ENCODE measurements at regions of chr3 and their contacts with region 1.

Region 1: DNA sequence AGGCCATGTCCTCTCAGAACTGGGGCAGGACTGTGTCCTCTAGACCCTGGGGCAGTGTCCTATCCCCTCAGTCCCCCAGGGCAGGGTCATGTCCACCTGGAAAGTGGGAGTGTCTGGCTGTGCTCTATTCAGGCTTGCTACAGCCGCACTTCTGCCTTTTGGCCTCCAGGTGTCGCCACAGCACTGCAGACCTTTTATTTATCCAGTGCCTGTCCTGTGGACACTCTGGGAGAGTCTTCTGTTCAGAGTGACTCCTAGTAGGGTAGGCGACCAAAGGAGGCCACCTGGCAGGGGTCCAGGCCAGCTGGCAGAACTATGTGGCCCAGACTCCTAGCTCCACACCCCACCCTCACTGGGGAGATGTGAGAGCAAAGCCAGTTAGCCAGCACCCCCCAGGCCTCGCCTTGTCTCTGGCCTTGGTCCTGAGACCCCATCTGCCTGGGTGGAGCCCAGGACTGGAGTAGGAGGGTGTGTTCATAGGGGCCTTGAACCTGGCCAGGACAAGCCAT is 3.9 kb downstream of the TMIE start:
- DNase-seq: peak; percentile 60 to 78
- H3K4me3 ChIP-seq: no peak overlapping the region
- H3K27ac ChIP-seq: no peak overlapping the region
- H3K4me1 ChIP-seq: peaks cover 18% of the 10 kb centered on the region
- H3K27me3 ChIP-seq: no peaks in the 10 kb centered on the region
- CTCF ChIP-seq: peak; percentile 90

Region 2: DNA sequence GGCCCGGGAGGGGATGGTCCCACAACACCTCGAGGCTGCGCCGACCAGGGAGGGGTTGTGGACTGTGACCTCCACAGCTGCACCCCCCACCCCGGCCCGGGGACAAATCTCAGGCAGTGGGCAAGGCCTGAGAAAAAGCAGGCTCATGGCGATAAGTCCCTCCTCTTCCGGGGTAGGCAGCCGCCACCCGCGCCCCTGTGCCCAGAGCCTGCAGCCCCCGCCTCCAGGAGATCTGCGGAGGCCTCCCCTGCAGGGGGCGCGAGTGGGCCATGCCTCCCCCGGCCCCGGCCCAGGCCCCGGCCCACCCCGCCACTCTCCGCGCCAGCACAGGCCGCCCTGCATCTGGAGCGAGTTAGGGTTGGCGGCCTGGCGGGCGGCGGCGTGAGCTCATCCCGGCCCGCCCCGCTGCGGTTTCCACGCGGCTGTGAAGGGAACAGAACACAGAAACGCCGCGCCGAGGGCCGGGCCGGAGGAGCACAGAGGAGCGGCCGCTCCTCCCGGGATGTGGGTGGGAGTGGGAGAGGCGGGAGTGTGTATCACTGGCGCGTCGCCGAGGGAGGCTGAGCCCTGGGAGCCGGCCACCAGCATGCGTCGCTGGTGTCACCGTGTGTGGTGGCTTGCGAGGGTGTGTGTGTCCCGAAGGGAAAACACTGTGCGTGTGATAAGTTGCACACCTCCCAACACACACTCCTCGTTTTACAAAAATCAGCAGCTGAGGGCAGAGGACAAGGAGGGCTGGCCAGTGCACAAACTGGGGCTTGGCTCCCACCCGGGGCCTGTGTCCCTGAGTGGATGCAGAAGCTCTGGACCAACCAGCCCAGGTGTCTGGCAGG is 140.9 kb after region 1 on chr3:
- CTCF ChIA-PET with region 1: no interaction called
- POLR2A ChIA-PET with region 1: no interaction called
- intact Hi-C with region 1: loop called (anchors 1 kb)
- DNase-seq: peak in 1 of 2 experiments; percentile 88
- H3K4me3 ChIP-seq: peak overlapping the region; percentile 59; the same call in 1 of the 2 replicates
- H3K27ac ChIP-seq: no peak overlapping the region
- H3K4me1 ChIP-seq: 0 out of 2 replicates have a peak, but pooled peaks cover 5% of the 10 kb centered on the region
- H3K27me3 ChIP-seq: no peaks in the 10 kb centered on the region
- CTCF ChIP-seq: peak; percentile 48; the same call in 1 of the 2 replicates

Region 3: GRCh38 chr3:46895204-46895660 is 190.2 kb after region 1 on chr3:
- CTCF ChIA-PET with region 1: interaction called, 7 read pairs
- POLR2A ChIA-PET with region 1: no interaction called
- intact Hi-C with region 1: loop called (anchors 1 kb)
- DNase-seq: peak in 1 of 2 experiments; percentile 68
- H3K4me3 ChIP-seq: no peak overlapping the region
- H3K27ac ChIP-seq: no peak overlapping the region
- H3K4me1 ChIP-seq: 0 out of 2 replicates have a peak, but pooled peaks cover 4% of the 10 kb centered on the region
- H3K27me3 ChIP-seq: no peaks in the 10 kb centered on the region
- CTCF ChIP-seq: peak; percentile 86

Region 4: GRCh38 chr3:46998121-46998851 is 293.2 kb after region 1 on chr3:
- CTCF ChIA-PET with region 1: no interaction called
- POLR2A ChIA-PET with region 1: no interaction called
- intact Hi-C with region 1: loop called (anchors 5 kb)
- DNase-seq: peak; percentile 44 to 75
- H3K4me3 ChIP-seq: no peak overlapping the region
- H3K27ac ChIP-seq: no peak overlapping the region
- H3K4me1 ChIP-seq: no peaks in the 10 kb centered on the region
- H3K27me3 ChIP-seq: no peaks in the 10 kb centered on the region
- CTCF ChIP-seq: peak; percentile 79

Region 5: GRCh38 chr3:47380601-47381316 is 675.7 kb after region 1 on chr3 and contains the start of gene PTPN23:
- CTCF ChIA-PET with region 1: no interaction called
- POLR2A ChIA-PET with region 1: no interaction called
- intact Hi-C with region 1: loop called (anchors 5 kb)
- DNase-seq: peak; percentile 94 to 99
- H3K4me3 ChIP-seq: peak within 1 kb of the TSS; percentile 66
- H3K27ac ChIP-seq: peak within 1 kb of the TSS; percentile 92
- H3K4me1 ChIP-seq: peaks cover 21% of the 10 kb centered on the region
- H3K27me3 ChIP-seq: no peaks in the 10 kb centered on the region
- CTCF ChIP-seq: no peak
- total RNA-seq, gene PTPN23: 36.9 and 38.9 TPM in 2 replicates